ENCODE measurements at regions of chr11 and their contacts with region 1.

Region 1: GRCh38 chr11:95067039-95067840 is 521 bp downstream of the SRSF8 start:
- DNase-seq: peak; percentile 64 to 88 (median 68)
- ATAC-seq: peak; percentile 87
- H3K4me3 ChIP-seq: peak overlapping the region; percentile 86
- H3K27ac ChIP-seq: peak overlapping the region; percentile 94
- H3K4me1 ChIP-seq: peaks cover 0 to 5% of the 10 kb centered on the region in 2 experiments; a peak in 3 of 5 replicates
- H3K27me3 ChIP-seq: no peaks in the 10 kb centered on the region
- CTCF ChIP-seq: peak; percentile 63 to 98 (median 87)
- EP300 ChIP-seq: no peak
- POLR2A ChIP-seq: peak; percentile 87
- RAD21 ChIP-seq: peak in 1 of 2 experiments; percentile 43; a peak in 3 of 4 replicates

Region 2: DNA sequence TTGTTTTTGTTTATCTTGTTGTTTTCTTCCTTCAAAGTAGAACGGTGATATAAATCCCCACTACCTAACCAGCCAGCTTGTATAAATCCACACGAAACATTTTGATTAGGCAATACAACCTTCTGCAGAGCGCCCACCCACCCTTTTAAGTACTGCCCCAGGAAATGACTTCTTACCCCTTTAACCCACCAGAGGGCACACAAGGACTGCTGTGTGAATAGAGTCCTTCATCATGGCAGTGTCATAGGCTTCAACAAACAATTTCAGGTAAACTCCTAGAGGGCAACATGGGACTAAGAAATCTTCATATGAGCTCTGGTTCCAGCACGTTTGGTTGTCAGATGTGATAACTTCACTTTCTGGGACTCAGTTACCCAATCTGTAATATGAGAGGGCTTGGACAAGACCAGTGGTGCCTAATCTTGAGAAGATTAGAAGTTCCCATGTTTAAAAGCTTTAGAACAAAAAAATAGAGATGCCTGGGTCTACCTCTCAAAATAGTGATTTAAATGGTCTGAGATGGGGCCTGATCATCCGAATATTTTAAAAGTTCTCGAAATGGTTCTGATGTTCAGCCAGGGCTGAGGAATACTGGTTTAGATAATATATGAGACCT is 444.0 kb before region 1 on chr11:
- CTCF ChIA-PET with region 1: no interaction called
- POLR2A ChIA-PET with region 1: no interaction called
- in situ Hi-C with region 1: no loop called
- intact Hi-C with region 1: loop called (anchors 5 kb)
- DNase-seq: peak; percentile 66 to 84 (median 70)
- ATAC-seq: peak; percentile 99
- H3K4me3 ChIP-seq: no peak overlapping the region
- H3K27ac ChIP-seq: no peak overlapping the region
- H3K4me1 ChIP-seq: no peaks in the 10 kb centered on the region; a peak in 1 of 5 replicates
- H3K27me3 ChIP-seq: no peaks in the 10 kb centered on the region
- CTCF ChIP-seq: peak; percentile 67 to 94 (median 93)
- EP300 ChIP-seq: no peak
- POLR2A ChIP-seq: no peak
- RAD21 ChIP-seq: peak; percentile 98 to 100

Region 3: DNA sequence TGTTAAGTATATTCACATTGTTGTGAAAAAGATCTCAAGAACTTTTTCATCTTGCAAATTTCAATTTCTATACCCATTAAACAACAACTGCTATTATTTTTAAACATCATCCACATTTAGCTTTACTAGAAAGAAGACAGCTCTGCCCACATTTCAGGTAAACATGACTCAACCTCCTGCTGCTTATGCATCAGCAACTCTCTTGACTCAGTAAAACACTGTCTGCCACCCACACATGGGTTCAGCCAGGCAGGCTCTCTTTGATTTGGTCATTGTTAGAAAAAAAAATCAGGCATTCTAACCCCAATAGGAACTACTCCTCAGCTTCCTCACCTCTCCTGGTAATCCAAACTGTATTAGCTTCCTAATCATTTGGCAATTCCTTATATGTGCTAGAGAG is 17.3 kb after region 1 on chr11:
- CTCF ChIA-PET with region 1: no interaction called
- POLR2A ChIA-PET with region 1: interaction called, 33 read pairs
- in situ Hi-C with region 1: no loop called
- intact Hi-C with region 1: loop called (anchors 2 kb)
- DNase-seq: peak in 1 of 4 experiments; percentile 44
- ATAC-seq: no peak
- H3K4me3 ChIP-seq: no peak overlapping the region
- H3K27ac ChIP-seq: no peak overlapping the region
- H3K4me1 ChIP-seq: peaks cover 5% of the 10 kb centered on the region in 2 experiments; a peak in 4 of 5 replicates
- H3K27me3 ChIP-seq: no peaks in the 10 kb centered on the region
- CTCF ChIP-seq: no peak
- EP300 ChIP-seq: no peak
- POLR2A ChIP-seq: no peak
- RAD21 ChIP-seq: no peak

Region 4: DNA sequence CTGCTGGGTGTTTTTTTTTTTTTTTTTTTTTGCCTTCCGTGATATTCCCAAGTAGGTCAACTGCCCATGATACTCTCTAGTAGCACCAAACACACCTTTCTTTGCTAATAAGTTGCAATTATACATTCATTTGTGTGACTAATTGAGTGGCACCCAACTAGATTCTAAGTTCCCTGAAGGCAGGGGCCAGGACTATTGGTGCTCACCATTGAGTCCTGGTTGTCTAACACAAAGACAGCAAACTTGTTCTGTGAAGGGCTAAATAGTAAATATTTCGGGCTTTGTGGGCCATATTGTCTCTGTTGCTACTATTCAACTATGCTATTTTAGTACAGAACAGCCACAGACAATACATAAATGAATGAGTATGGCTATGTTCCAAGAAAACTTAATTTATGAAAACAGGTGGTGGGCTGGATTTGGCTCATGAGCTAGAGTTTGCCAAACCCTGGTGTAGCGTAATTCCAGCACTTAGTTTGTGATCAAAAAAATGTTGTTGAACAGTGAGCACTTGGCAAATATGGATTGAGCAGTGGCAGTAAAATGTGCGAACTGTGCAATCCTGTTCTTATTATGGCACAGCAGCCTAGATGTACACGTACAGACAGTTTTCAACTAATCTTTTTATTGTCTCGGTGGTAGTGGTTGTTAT is 33.7 kb after region 1 on chr11:
- CTCF ChIA-PET with region 1: no interaction called
- POLR2A ChIA-PET with region 1: interaction called, 10 read pairs
- in situ Hi-C with region 1: no loop called
- intact Hi-C with region 1: no loop called
- DNase-seq: no peak
- ATAC-seq: no peak
- H3K4me3 ChIP-seq: no peak overlapping the region
- H3K27ac ChIP-seq: no peak overlapping the region
- H3K4me1 ChIP-seq: peaks cover 6 to 43% of the 10 kb centered on the region in 2 experiments; a peak in 4 of 5 replicates
- H3K27me3 ChIP-seq: no peaks in the 10 kb centered on the region
- CTCF ChIP-seq: no peak
- EP300 ChIP-seq: no peak
- POLR2A ChIP-seq: no peak
- RAD21 ChIP-seq: no peak

Region 5: GRCh38 chr11:95119374-95120060 is 52.3 kb after region 1 on chr11:
- CTCF ChIA-PET with region 1: no interaction called
- POLR2A ChIA-PET with region 1: no interaction called
- in situ Hi-C with region 1: no loop called
- intact Hi-C with region 1: no loop called
- DNase-seq: no peak
- ATAC-seq: no peak
- H3K4me3 ChIP-seq: no peak overlapping the region
- H3K27ac ChIP-seq: no peak overlapping the region
- H3K4me1 ChIP-seq: peaks cover 6 to 7% of the 10 kb centered on the region in 2 experiments; a peak in 1 of 5 replicates
- H3K27me3 ChIP-seq: no peaks in the 10 kb centered on the region
- CTCF ChIP-seq: no peak
- EP300 ChIP-seq: no peak
- POLR2A ChIP-seq: no peak
- RAD21 ChIP-seq: no peak

Region 6: GRCh38 chr11:95138448-95138847 is 71.2 kb after region 1 on chr11:
- CTCF ChIA-PET with region 1: interaction called, 16 read pairs
- POLR2A ChIA-PET with region 1: interaction called, 5 read pairs
- in situ Hi-C with region 1: loop called (anchors 5 kb)
- intact Hi-C with region 1: loop called (anchors 1 kb)
- DNase-seq: peak in 2 of 4 experiments; percentile 46 to 55
- ATAC-seq: peak; percentile 94
- H3K4me3 ChIP-seq: no peak overlapping the region
- H3K27ac ChIP-seq: no peak overlapping the region
- H3K4me1 ChIP-seq: peaks cover 0 to 27% of the 10 kb centered on the region in 2 experiments; a peak in 3 of 5 replicates
- H3K27me3 ChIP-seq: no peaks in the 10 kb centered on the region; a peak in 1 of 5 replicates
- CTCF ChIP-seq: peak; percentile 43 to 76 (median 55); a peak in 4 of 6 replicates
- EP300 ChIP-seq: no peak
- POLR2A ChIP-seq: no peak
- RAD21 ChIP-seq: peak; percentile 86 to 89

Region 7: GRCh38 chr11:95764267-95764898 is 697.1 kb after region 1 on chr11:
- CTCF ChIA-PET with region 1: no interaction called
- POLR2A ChIA-PET with region 1: no interaction called
- in situ Hi-C with region 1: no loop called
- intact Hi-C with region 1: loop called (anchors 10 kb)
- DNase-seq: peak; percentile 54 to 65 (median 60)
- ATAC-seq: peak; percentile 81
- H3K4me3 ChIP-seq: no peak overlapping the region
- H3K27ac ChIP-seq: no peak overlapping the region
- H3K4me1 ChIP-seq: no peaks in the 10 kb centered on the region
- H3K27me3 ChIP-seq: no peaks in the 10 kb centered on the region
- CTCF ChIP-seq: peak; percentile 38 to 78 (median 54); a peak in 4 of 6 replicates
- EP300 ChIP-seq: no peak
- POLR2A ChIP-seq: no peak
- RAD21 ChIP-seq: peak; percentile 93 to 96

Measured in K562 (cell line).